Panc1 (cell line): ENCODE measurements at regions of chr2 and their contacts with region 1.

Region 1: GRCh38 chr2:219199470-219200211 is 6.9 kb upstream of the ZFAND2B start:
- DNase-seq: no peak
- ATAC-seq: no peak
- H3K4me3 ChIP-seq: no peak overlapping the region
- H3K27ac ChIP-seq: no peak overlapping the region
- H3K4me1 ChIP-seq: no peaks in the 10 kb centered on the region
- H3K27me3 ChIP-seq: no peaks in the 10 kb centered on the region
- CTCF ChIP-seq: no peak

Region 2: DNA sequence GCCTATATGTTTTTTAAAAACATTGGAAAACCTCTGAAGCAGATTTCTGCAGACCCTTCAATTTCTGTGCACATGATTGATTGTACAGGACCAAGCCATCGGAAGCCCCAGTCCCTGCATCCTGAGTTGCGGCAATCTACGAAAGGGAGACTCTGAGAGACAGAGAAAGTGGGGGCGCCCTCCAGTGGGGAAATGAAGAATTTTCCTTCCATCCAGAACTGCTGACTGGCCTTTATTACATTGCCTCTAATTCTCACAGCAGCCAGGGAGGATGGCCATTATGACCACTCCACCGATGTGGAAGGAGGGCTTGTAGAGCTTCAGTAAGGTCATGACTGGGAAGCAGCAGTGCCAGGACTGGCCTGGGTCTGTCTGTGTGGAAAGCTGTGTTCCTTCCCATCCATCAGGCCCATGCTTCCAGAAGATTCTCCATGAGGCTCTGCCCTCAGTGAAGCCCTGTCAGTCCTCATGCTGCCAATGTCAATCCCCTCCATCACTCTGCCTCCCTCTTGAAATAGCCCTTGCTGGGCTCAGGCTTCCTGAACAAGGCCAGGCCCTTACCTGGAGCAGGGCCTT is 152.9 kb after region 1 on chr2:
- CTCF ChIA-PET with region 1: no interaction called
- POLR2A ChIA-PET with region 1: no interaction called
- in situ Hi-C with region 1: no loop called
- intact Hi-C with region 1: no loop called
- DNase-seq: peak; percentile 30
- ATAC-seq: peak; percentile 90
- H3K4me3 ChIP-seq: no peak overlapping the region
- H3K27ac ChIP-seq: no peak overlapping the region
- H3K4me1 ChIP-seq: no peaks in the 10 kb centered on the region
- H3K27me3 ChIP-seq: no peaks in the 10 kb centered on the region
- CTCF ChIP-seq: peak; percentile 89

Region 3: GRCh38 chr2:219388127-219388844 is 188.6 kb after region 1 on chr2:
- CTCF ChIA-PET with region 1: no interaction called
- POLR2A ChIA-PET with region 1: interaction called, 13 read pairs
- in situ Hi-C with region 1: no loop called
- intact Hi-C with region 1: no loop called
- DNase-seq: no peak
- ATAC-seq: peak; percentile 88
- H3K4me3 ChIP-seq: peak overlapping the region; percentile 51
- H3K27ac ChIP-seq: peak overlapping the region; percentile 87
- H3K4me1 ChIP-seq: peaks cover 12% of the 10 kb centered on the region
- H3K27me3 ChIP-seq: no peaks in the 10 kb centered on the region
- CTCF ChIP-seq: peak; percentile 79